Dendritic cell treated with granulocyte-macrophage colony-stimulating factor and Interleukin-4, amounts not matched to agents 40 ng/mL and 50 ng/mL, for 4 days (primary cell): ENCODE measurements at regions of chr17 and their contacts with region 1.

Region 1: GRCh38 chr17:39429600-39429999 is 21.5 kb downstream of the MED1 start:
- H3K4me3 Mint-ChIP-seq: no peak overlapping the region
- H3K27ac Mint-ChIP-seq: no peak overlapping the region
- H3K4me1 Mint-ChIP-seq: no peaks in the 10 kb centered on the region
- H3K27me3 Mint-ChIP-seq: no peaks in the 10 kb centered on the region

Region 2: DNA sequence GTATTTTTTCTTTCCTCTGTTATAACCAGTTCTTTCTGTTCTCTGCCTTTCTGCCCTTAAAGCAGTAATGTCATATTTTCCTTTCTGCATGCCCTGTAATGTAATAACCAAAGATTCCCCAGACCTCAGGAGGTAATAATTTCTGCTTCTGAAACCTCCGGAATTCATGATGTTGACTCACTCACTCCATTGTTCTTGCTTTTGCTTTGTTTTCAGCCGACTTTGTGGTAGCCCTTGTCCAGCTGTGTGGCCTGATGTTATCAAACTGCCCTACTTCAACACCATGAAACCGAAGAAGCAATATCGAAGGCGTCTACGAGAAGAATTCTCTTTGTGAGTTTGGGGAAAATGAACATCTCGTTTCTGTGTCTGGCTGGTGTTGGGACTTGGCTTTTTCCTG is 87.6 kb after region 1 on chr17:
- intact Hi-C with region 1: loop called (anchors 10 kb)
- H3K4me3 Mint-ChIP-seq: no peak overlapping the region
- H3K27ac Mint-ChIP-seq: no peak overlapping the region
- H3K4me1 Mint-ChIP-seq: no peaks in the 10 kb centered on the region
- H3K27me3 Mint-ChIP-seq: no peaks in the 10 kb centered on the region